CD8-positive, alpha-beta T cell (primary cell): ENCODE measurements at regions of chr11 and their contacts with region 1.

Region 1: DNA sequence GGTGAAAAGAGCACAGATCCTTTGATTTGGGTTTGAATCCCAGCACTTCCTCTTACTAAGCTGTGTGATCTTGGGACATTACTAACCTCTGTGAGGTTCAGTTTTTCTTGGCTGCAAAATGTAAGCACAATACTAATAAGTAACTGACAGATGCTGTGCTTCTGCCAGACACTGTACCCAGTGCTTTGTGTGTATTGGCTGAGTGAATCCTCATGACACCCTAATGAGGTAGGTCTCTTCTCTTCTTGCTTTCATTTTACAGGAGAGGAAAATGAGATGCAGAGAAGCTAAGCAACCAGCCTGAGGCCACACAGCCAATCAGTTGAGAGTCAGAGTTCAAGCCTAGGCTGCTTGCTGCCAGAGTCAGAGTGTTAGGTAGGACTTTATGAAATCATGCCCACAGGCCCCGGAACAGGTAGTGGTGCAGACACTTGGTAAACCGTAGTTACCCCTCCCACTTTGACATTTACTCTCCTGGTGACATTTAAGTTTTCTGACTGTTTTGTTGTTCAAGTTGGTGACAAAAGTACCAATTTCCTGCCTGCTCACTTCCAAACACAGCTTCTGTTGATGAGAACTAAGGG is 21.2 kb downstream of the PTPRJ start:
- DNase-seq: peak; percentile 66 to 98 (median 82)
- ATAC-seq: peak; percentile 89
- H3K4me3 ChIP-seq: peak overlapping the region in 1 of 2 experiments; percentile 13
- H3K4me3 Mint-ChIP-seq: peak overlapping the region; percentile 35
- H3K27ac ChIP-seq: peak overlapping the region; percentile 62 to 73
- H3K27ac Mint-ChIP-seq: peak overlapping the region; percentile 93
- H3K4me1 ChIP-seq: peaks cover 82% of the 10 kb centered on the region
- H3K4me1 Mint-ChIP-seq: peaks cover 78% of the 10 kb centered on the region
- H3K27me3 ChIP-seq: no peaks in the 10 kb centered on the region
- H3K27me3 Mint-ChIP-seq: no peaks in the 10 kb centered on the region
- CTCF ChIP-seq: no peak

Region 2: GRCh38 chr11:47766305-47767227 is 235.0 kb before region 1 on chr11:
- CTCF ChIA-PET with region 1: no interaction called
- POLR2A ChIA-PET with region 1: no interaction called
- intact Hi-C with region 1: loop called (anchors 1 to 5 kb)
- DNase-seq: peak; percentile 48 to 90 (median 74)
- ATAC-seq: peak; percentile 33
- H3K4me3 ChIP-seq: peak overlapping the region; percentile 75 to 79
- H3K4me3 Mint-ChIP-seq: peak overlapping the region; percentile 94
- H3K27ac ChIP-seq: peak overlapping the region; percentile 91 to 97
- H3K27ac Mint-ChIP-seq: peak overlapping the region; percentile 100
- H3K4me1 ChIP-seq: peaks cover 29% of the 10 kb centered on the region
- H3K4me1 Mint-ChIP-seq: peaks cover 31% of the 10 kb centered on the region
- H3K27me3 ChIP-seq: no peaks in the 10 kb centered on the region
- H3K27me3 Mint-ChIP-seq: no peaks in the 10 kb centered on the region
- CTCF ChIP-seq: no peak

Region 3: GRCh38 chr11:47932544-47932943 is 69.0 kb before region 1 on chr11:
- CTCF ChIA-PET with region 1: interaction called, 11 read pairs
- POLR2A ChIA-PET with region 1: no interaction called
- intact Hi-C with region 1: loop called in 1 of 2 experiments (anchors 5 kb)
- DNase-seq: no peak
- ATAC-seq: no peak
- H3K4me3 ChIP-seq: no peak overlapping the region
- H3K4me3 Mint-ChIP-seq: no peak overlapping the region
- H3K27ac ChIP-seq: no peak overlapping the region
- H3K27ac Mint-ChIP-seq: no peak overlapping the region
- H3K4me1 ChIP-seq: peaks cover 9% of the 10 kb centered on the region
- H3K4me1 Mint-ChIP-seq: peaks cover 14% of the 10 kb centered on the region
- H3K27me3 ChIP-seq: no peaks in the 10 kb centered on the region
- H3K27me3 Mint-ChIP-seq: no peaks in the 10 kb centered on the region
- CTCF ChIP-seq: no peak

Region 4: DNA sequence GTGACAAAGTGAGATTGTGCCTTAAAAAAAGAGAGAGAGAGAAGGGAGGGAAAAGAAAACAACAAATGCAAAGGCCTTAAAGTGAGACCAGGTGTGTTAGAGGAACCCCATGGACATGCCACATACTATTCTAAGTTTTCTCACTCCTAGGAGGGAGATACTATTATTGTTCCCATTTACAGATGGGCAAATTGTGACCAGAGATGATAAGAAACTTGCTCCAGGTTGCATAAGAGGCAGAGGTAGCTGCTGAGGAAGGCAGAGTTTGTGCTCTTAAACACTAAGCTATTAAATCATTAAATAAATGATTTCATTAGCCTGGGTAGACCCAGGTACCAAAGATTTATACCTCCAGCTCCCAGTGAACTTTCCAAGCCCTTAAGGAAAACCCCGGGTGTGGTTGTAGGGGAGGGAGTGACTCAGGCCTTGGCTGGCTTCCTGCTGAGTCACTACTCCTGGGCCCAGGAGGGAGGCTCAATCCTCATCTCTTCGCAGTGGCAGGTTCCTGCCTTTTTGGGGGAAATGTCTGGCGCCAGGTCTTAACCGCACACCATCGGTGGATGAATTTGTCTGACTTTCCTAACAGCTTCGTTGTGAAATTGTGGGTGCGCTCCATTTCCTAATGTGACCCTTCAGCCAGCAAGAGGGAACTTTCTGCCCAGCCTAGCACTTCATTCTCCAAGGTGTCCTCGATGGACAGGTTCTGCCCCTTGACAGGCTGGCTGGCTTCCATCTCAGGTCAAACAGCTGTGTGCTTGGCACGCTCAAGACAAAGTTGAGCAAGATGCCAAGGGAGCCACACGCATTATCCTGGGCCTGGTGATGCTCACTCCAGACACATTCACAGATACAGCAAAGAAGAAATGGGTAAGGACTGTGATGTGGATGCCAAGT is 54.6 kb before region 1 on chr11:
- CTCF ChIA-PET with region 1: no interaction called
- POLR2A ChIA-PET with region 1: interaction called, 10 read pairs
- intact Hi-C with region 1: loop called in 1 of 2 experiments (anchors 2 kb)
- DNase-seq: peak in 2 of 9 experiments; percentile 17 to 33
- ATAC-seq: no peak
- H3K4me3 ChIP-seq: no peak overlapping the region
- H3K4me3 Mint-ChIP-seq: no peak overlapping the region
- H3K27ac ChIP-seq: no peak overlapping the region
- H3K27ac Mint-ChIP-seq: no peak overlapping the region
- H3K4me1 ChIP-seq: peaks cover 22% of the 10 kb centered on the region
- H3K4me1 Mint-ChIP-seq: peaks cover 30% of the 10 kb centered on the region
- H3K27me3 ChIP-seq: no peaks in the 10 kb centered on the region
- H3K27me3 Mint-ChIP-seq: no peaks in the 10 kb centered on the region
- CTCF ChIP-seq: no peak

Region 5: GRCh38 chr11:48013269-48013901 is 11.9 kb after region 1 on chr11:
- CTCF ChIA-PET with region 1: interaction called, 12 read pairs
- POLR2A ChIA-PET with region 1: interaction called, 47 read pairs
- intact Hi-C with region 1: loop called (anchors 1 kb)
- DNase-seq: peak in 8 of 9 experiments; percentile 18 to 85 (median 63)
- ATAC-seq: peak; percentile 42
- H3K4me3 ChIP-seq: peak overlapping the region in 1 of 2 experiments; percentile 0
- H3K4me3 Mint-ChIP-seq: peak overlapping the region; percentile 27
- H3K27ac ChIP-seq: peak overlapping the region; percentile 36 to 91
- H3K27ac Mint-ChIP-seq: peak overlapping the region; percentile 92
- H3K4me1 ChIP-seq: peaks cover 85% of the 10 kb centered on the region
- H3K4me1 Mint-ChIP-seq: peaks cover 81% of the 10 kb centered on the region
- H3K27me3 ChIP-seq: no peaks in the 10 kb centered on the region
- H3K27me3 Mint-ChIP-seq: no peaks in the 10 kb centered on the region
- CTCF ChIP-seq: no peak

Region 6: GRCh38 chr11:48055292-48056132 is 54.0 kb after region 1 on chr11:
- CTCF ChIA-PET with region 1: interaction called, 4 read pairs
- POLR2A ChIA-PET with region 1: interaction called, 24 read pairs
- intact Hi-C with region 1: loop called in 1 of 2 experiments (anchors 2 kb)
- DNase-seq: peak in 8 of 9 experiments; percentile 36 to 80 (median 58)
- ATAC-seq: peak; percentile 76
- H3K4me3 ChIP-seq: peak overlapping the region; percentile 0 to 36
- H3K4me3 Mint-ChIP-seq: peak overlapping the region; percentile 72
- H3K27ac ChIP-seq: peak overlapping the region; percentile 13 to 38
- H3K27ac Mint-ChIP-seq: peak overlapping the region; percentile 87
- H3K4me1 ChIP-seq: peaks cover 69% of the 10 kb centered on the region
- H3K4me1 Mint-ChIP-seq: peaks cover 80% of the 10 kb centered on the region
- H3K27me3 ChIP-seq: no peaks in the 10 kb centered on the region
- H3K27me3 Mint-ChIP-seq: no peaks in the 10 kb centered on the region
- CTCF ChIP-seq: no peak